Prostate gland (tissue), 2 donors: ENCODE measurements at regions of chr1 and their contacts with region 1.

Region 1: GRCh38 chr1:89063094-89063493 is 1.9 kb downstream of the GBP1 start:
- DNase-seq: no peak
- H3K4me3 ChIP-seq: no peak overlapping the region
- H3K27ac ChIP-seq: peak overlapping the region; percentile 84 to 86
- H3K4me1 ChIP-seq: no peaks in the 10 kb centered on the region
- H3K27me3 ChIP-seq: no peaks in the 10 kb centered on the region
- CTCF ChIP-seq: no peak
- POLR2A ChIP-seq: no peak

Region 2: DNA sequence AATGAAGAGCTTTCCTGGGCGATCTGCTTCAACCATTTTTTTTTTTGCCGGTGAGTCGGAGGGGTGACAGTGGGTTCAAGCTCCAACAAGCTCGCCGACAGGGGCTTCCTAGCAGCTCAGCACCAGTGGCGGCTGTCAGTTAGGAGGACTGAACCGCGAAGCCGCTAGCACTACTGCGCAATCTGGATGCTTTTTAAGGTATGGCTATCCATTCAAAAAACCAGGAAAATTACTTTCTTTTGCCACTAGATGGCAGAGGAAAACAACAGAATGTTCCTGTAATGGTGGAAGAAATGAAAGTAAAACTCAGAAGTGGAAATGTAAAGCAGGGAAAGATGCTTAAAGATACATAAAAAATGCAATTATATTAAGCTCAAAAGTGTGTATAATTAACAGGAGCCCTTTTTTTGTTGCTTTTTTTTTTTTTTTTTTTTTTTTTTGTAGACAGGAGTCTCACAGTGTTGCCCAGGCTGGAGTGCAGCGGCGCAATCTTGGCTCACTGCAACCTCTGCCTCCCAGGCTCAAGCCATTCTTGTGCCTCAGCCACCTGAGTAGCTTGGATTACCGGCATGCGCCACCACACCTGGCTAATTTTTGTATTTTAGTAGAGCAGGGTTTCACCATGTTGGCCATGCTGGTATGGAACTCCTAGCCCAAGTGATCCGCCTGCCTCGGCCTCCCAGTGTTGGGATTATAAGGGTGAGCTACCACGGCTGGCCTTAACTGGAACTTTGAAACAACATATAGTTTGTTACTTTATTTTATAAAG is 79.1 kb before region 1 on chr1:
- intact Hi-C with region 1: loop called (anchors 2 kb)
- DNase-seq: no peak
- H3K4me3 ChIP-seq: no peak overlapping the region
- H3K27ac ChIP-seq: peak overlapping the region; percentile 28 to 66
- H3K4me1 ChIP-seq: peaks cover 3% of the 10 kb centered on the region
- H3K27me3 ChIP-seq: no peaks in the 10 kb centered on the region
- CTCF ChIP-seq: peak in 3 of 4 experiments; percentile 48 to 71 (median 63)
- POLR2A ChIP-seq: no peak

Region 3: GRCh38 chr1:89022167-89022959 is 40.7 kb before region 1 on chr1 and contains the start of gene GBP3:
- intact Hi-C with region 1: loop called (anchors 2 kb)
- DNase-seq: no peak
- H3K4me3 ChIP-seq: peak within 1 kb of the TSS; percentile 27 to 43
- H3K27ac ChIP-seq: peak within 1 kb of the TSS; percentile 85 to 88
- H3K4me1 ChIP-seq: no peaks in the 10 kb centered on the region
- H3K27me3 ChIP-seq: no peaks in the 10 kb centered on the region
- CTCF ChIP-seq: no peak
- POLR2A ChIP-seq: peak; percentile 21
- total RNA-seq, gene GBP3: 15.8 to 32.7 TPM

Region 4: GRCh38 chr1:89171067-89171438 is 108.0 kb after region 1 on chr1:
- intact Hi-C with region 1: no loop called
- DNase-seq: no peak
- H3K4me3 ChIP-seq: no peak overlapping the region
- H3K27ac ChIP-seq: no peak overlapping the region
- H3K4me1 ChIP-seq: no peaks in the 10 kb centered on the region
- H3K27me3 ChIP-seq: no peaks in the 10 kb centered on the region
- CTCF ChIP-seq: no peak
- POLR2A ChIP-seq: no peak